Activated B cell treated with CpG ODN at 0.5 μM for 24 hours (primary cell): ENCODE measurements at regions of chr2 and their contacts with region 1.

Region 1: GRCh38 chr2:191617575-191617974 is 60.4 kb upstream of the NABP1 start:
- DNase-seq: peak; percentile 19
- ATAC-seq: peak; percentile 90
- H3K4me3 Mint-ChIP-seq: peak overlapping the region; percentile 56
- H3K27ac Mint-ChIP-seq: peak overlapping the region; percentile 86
- H3K4me1 Mint-ChIP-seq: peaks cover 53% of the 10 kb centered on the region
- H3K27me3 Mint-ChIP-seq: no peaks in the 10 kb centered on the region
- CTCF ChIP-seq: no peak

Region 2: DNA sequence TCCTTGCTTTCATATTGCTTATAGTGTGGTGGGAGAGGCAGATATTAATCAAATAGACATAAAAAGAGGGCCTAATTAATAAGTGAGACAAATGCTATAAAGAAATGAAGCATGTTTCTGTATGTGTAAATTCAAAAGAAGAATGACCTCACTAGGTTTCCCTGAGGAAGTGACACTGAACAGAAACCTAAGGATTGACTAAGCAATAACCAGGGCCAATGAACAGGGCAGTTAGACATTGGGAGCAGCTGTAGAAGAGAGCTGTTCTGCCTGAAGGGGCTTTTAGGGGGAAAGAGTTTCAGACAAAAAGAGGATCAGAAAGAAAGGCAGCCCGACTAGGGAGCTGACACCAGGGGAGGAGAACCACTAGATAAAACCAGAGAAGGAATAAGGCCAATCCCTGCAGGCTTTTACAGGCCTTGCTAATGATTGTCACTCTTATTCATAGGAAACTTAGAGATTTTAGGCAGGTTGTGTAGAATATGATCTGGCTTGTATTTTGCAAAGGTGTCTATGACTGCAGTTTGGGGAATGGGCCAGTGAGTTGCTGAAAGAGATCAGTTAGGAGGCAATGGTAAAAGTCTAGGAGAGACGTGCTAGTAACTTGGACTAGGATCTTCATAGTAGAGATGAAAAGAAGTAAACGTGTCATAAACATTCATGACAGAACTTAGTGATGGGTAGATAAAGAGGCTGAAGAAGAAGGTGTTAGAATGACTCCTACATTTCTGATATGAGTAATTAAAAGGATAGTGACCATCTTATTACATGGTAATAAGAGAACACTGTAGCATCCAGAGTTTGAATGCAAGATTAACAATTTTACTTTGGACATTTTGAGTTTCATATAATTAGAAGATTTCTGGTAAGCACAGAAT is 33.6 kb after region 1 on chr2:
- CTCF ChIA-PET with region 1: no interaction called
- POLR2A ChIA-PET with region 1: interaction called, 5 read pairs
- intact Hi-C with region 1: loop called (anchors 1 kb)
- DNase-seq: no peak
- ATAC-seq: peak; percentile 83
- H3K4me3 Mint-ChIP-seq: no peak overlapping the region
- H3K27ac Mint-ChIP-seq: peak overlapping the region; percentile 38
- H3K4me1 Mint-ChIP-seq: peaks cover 14% of the 10 kb centered on the region
- H3K27me3 Mint-ChIP-seq: no peaks in the 10 kb centered on the region
- CTCF ChIP-seq: no peak

Region 3: DNA sequence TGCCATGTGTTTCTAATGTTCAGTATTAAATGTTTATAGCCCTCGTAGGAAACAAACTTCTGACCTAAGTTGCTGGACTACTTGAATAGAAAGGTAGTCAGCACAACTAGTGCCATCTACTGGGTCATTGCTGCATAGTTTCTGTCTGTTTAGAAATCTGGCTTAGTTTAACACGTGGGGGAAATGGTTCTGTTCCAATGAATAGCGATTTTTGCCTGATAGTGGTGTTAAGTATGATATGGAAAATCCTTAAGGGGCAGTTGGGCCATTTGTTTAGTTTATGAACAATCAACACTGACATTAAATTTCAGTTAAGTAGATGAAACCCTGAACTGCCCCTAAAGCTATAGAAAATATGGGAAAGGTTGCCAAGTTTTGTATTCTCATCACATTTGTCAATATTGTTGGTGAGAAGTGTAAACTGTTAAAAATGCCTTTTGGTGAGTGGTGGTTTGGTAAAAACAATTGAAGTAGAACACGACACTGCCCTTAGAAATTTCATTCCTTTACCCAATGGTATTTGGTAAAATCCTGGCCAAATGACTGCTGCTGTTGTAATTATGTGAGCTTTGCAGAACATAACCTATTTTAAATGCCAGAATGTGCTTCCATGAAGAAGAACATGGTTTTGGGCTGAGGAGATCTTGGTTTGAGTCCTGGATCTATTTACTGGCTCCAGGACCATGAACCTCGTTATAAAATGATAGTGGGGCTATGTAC is 73.6 kb after region 1 on chr2:
- CTCF ChIA-PET with region 1: no interaction called
- POLR2A ChIA-PET with region 1: interaction called, 6 read pairs
- intact Hi-C with region 1: loop called (anchors 1 kb)
- DNase-seq: no peak
- ATAC-seq: peak; percentile 85
- H3K4me3 Mint-ChIP-seq: no peak overlapping the region
- H3K27ac Mint-ChIP-seq: peak overlapping the region; percentile 41
- H3K4me1 Mint-ChIP-seq: peaks cover 34% of the 10 kb centered on the region
- H3K27me3 Mint-ChIP-seq: no peaks in the 10 kb centered on the region
- CTCF ChIP-seq: no peak